ENCODE measurements at regions of chr7 and their contacts with region 1.

Region 1: DNA sequence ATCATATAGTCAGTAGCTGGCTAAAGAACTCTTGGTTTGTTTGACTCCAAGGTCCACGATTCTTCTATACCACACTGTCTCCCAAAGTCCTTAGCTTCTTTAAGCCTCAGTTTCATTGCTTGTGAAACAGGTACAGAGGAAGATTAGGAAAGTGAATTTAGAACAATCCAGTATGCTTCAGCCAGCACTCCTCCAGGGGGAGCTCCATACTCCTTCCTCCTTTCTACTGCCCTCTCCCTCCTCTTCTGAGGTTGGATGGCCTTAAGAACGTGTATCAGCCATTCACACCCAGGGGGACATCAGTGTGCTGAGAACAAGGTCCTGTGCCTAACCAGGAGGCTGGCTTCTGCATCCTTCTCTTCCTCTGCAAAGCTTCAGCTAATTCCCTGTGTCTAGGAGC is 54.8 kb upstream of the CALD1 start:
- DNase-seq: peak; percentile 56
- H3K4me3 ChIP-seq: no peak overlapping the region
- H3K27ac ChIP-seq: no peak overlapping the region
- H3K4me1 ChIP-seq: no peaks in the 10 kb centered on the region
- H3K27me3 ChIP-seq: no peaks in the 10 kb centered on the region
- CTCF ChIP-seq: peak; percentile 58 to 72
- POLR2A ChIP-seq: no peak

Region 2: DNA sequence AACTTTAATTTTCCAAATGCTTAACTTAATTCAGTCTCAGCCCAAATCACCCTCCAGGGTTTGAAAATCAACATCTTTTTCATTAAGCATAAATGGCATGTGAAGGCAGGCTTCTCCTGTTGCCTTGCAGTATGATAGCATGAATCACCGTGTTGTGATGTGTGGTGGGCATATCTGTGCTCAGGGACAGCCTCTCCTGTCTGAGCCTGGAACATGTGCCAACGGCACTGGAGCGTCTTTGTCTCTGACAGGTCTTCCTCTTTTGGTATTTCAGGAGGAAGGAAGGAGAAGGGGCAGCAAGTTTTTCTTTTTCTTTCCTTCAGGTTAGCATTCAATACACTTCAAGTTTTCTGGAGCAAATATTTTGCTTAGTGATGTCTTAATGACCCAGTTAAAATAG is 539.8 kb before region 1 on chr7:
- CTCF ChIA-PET with region 1: no interaction called
- POLR2A ChIA-PET with region 1: no interaction called
- dilution Hi-C with region 1: no loop called
- intact Hi-C with region 1: no loop called
- DNase-seq: no peak
- H3K4me3 ChIP-seq: no peak overlapping the region
- H3K27ac ChIP-seq: no peak overlapping the region
- H3K4me1 ChIP-seq: no peaks in the 10 kb centered on the region
- H3K27me3 ChIP-seq: peaks cover 2 to 3% of the 10 kb centered on the region in 2 experiments
- CTCF ChIP-seq: no peak
- POLR2A ChIP-seq: no peak

Region 3: DNA sequence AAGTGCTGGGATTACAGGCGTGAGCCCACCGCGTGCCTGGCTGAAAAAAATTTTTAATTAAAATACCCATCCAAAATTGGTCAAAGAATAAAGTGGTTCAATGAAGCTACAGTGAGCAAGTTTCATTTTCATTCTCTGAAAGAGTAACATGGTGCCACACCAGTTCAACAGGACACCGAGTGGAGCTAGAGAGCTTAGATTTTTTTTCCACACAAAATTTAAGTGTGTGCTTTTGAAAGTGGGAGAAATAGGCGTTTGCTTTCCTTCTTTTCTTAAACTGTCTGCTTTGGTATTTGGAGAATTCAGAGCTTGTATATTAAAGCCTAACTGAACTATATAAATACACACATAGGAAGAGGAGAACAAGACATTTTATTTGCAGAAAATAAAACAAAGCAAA is 34.6 kb before region 1 on chr7:
- CTCF ChIA-PET with region 1: interaction called, 14 read pairs
- POLR2A ChIA-PET with region 1: no interaction called
- dilution Hi-C with region 1: no loop called
- intact Hi-C with region 1: no loop called
- DNase-seq: peak; percentile 56
- H3K4me3 ChIP-seq: no peak overlapping the region
- H3K27ac ChIP-seq: no peak overlapping the region
- H3K4me1 ChIP-seq: no peaks in the 10 kb centered on the region
- H3K27me3 ChIP-seq: peaks cover 0 to 3% of the 10 kb centered on the region in 2 experiments
- CTCF ChIP-seq: peak in 1 of 2 donors; percentile 39
- POLR2A ChIP-seq: no peak

Region 4: DNA sequence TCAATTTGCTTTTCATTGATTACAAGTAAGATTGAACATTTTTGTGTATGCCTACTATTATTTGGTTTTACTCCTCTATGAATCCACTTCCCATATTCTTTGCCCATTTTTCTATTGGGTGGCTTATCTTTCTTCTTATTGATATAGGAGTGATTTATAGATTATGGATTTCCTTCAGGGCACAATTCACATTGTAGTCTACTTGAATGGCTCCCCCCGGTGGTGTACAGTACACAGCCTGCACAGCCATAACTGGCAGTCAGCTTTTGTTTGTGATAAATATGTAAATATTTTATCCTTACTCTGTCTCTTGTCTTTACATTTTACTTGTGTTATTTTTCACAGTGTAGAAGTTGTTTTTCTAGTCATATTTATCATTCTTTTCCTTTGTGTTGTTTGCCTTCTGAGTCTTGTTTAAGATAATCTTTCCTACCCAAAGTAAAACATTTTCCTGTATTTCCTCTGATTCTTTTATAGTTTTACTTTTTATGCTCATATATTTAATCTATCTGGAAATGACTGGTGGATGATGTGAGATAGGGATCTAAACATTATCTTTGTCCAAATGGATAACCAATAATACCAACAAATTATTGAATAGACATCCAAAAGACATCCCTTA is 30.9 kb after region 1 on chr7:
- CTCF ChIA-PET with region 1: interaction called, 39 read pairs
- POLR2A ChIA-PET with region 1: no interaction called
- dilution Hi-C with region 1: no loop called
- intact Hi-C with region 1: loop called (anchors 1 kb)
- DNase-seq: peak; percentile 54
- H3K4me3 ChIP-seq: no peak overlapping the region
- H3K27ac ChIP-seq: no peak overlapping the region
- H3K4me1 ChIP-seq: no peaks in the 10 kb centered on the region
- H3K27me3 ChIP-seq: no peaks in the 10 kb centered on the region
- CTCF ChIP-seq: peak; percentile 48 to 60
- POLR2A ChIP-seq: no peak

Region 5: GRCh38 chr7:134943764-134944400 is 219.3 kb after region 1 on chr7:
- CTCF ChIA-PET with region 1: interaction called, 4 read pairs
- POLR2A ChIA-PET with region 1: no interaction called
- dilution Hi-C with region 1: no loop called
- intact Hi-C with region 1: loop called (anchors 5 kb)
- DNase-seq: peak; percentile 55
- H3K4me3 ChIP-seq: no peak overlapping the region
- H3K27ac ChIP-seq: no peak overlapping the region
- H3K4me1 ChIP-seq: peaks cover 11% of the 10 kb centered on the region
- H3K27me3 ChIP-seq: no peaks in the 10 kb centered on the region
- CTCF ChIP-seq: peak; percentile 13 to 21
- POLR2A ChIP-seq: no peak